Gastrocnemius medialis (tissue), 4 donors: ENCODE measurements at regions of chr1 and their contacts with region 1.

Region 1: GRCh38 chr1:118151312-118151937 is 33.6 kb downstream of the SPAG17 start:
- DNase-seq: peak in 1 of 2 donors; percentile 26
- ATAC-seq: peak in 1 of 2 donors; percentile 44
- H3K4me3 ChIP-seq: no peak overlapping the region
- H3K27ac ChIP-seq: no peak overlapping the region
- H3K4me1 ChIP-seq: peaks cover 3 to 4% of the 10 kb centered on the region in 2 donors
- H3K27me3 ChIP-seq: no peaks in the 10 kb centered on the region
- CTCF ChIP-seq: peak; percentile 56 to 75 (median 62)
- POLR2A ChIP-seq: no peak

Region 2: GRCh38 chr1:118084400-118084799 is 67.0 kb before region 1 on chr1:
- in situ Hi-C with region 1: no loop called
- intact Hi-C with region 1: no loop called
- DNase-seq: no peak
- ATAC-seq: no peak
- H3K4me3 ChIP-seq: no peak overlapping the region
- H3K27ac ChIP-seq: no peak overlapping the region
- H3K4me1 ChIP-seq: no peaks in the 10 kb centered on the region
- H3K27me3 ChIP-seq: no peaks in the 10 kb centered on the region
- CTCF ChIP-seq: no peak
- POLR2A ChIP-seq: no peak

Region 3: GRCh38 chr1:118716782-118717181 is 565.4 kb after region 1 on chr1:
- in situ Hi-C with region 1: no loop called
- intact Hi-C with region 1: loop called (anchors 10 kb)
- DNase-seq: no peak
- ATAC-seq: no peak
- H3K4me3 ChIP-seq: no peak overlapping the region
- H3K27ac ChIP-seq: no peak overlapping the region
- H3K4me1 ChIP-seq: peaks cover 9 to 12% of the 10 kb centered on the region in 2 donors
- H3K27me3 ChIP-seq: no peaks in the 10 kb centered on the region
- CTCF ChIP-seq: peak in 2 of 5 experiments; percentile 35 to 42
- POLR2A ChIP-seq: no peak

Region 4: DNA sequence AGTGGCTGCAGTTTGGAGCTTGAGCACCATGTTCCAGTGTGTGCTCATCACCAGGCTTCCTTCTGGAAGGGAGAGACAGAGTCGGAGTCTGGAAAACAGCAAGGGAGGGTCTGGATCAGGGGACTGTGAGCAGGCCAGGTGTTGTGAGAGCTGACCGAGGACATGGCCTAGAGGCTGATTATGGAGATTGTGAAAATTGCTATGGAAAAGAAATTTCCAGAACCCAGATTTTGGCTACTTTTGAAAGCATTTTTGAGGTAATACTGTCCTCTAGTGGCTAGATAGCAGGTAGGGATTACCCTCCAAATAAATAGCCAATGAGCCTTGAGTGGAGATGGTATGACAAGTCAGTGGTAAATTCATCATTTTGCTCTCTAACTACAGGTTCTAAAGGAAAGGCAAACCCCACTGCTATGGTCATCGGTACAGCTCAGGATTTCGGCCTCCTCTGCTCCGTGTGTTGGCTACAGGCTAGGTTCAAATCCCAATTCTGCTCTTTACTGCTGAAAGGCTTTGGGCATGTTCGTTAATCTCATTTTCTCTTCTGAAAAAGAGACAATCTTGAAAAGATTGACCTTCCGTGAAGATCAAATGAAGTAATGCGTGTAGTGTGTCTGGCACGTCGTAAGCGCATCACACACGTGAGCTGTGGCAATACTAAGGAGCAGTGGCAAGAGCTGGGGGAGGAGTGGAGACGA is 1216.2 kb after region 1 on chr1:
- in situ Hi-C with region 1: loop called in 1 of 4 experiments (anchors 25 kb)
- intact Hi-C with region 1: no loop called
- DNase-seq: no peak
- ATAC-seq: peak in 1 of 2 donors; percentile 33
- H3K4me3 ChIP-seq: no peak overlapping the region
- H3K27ac ChIP-seq: no peak overlapping the region
- H3K4me1 ChIP-seq: no peaks in the 10 kb centered on the region
- H3K27me3 ChIP-seq: no peaks in the 10 kb centered on the region
- CTCF ChIP-seq: peak; percentile 55 to 65 (median 57)
- POLR2A ChIP-seq: no peak